Right lobe of liver (tissue), 6 donors: ENCODE measurements at regions of chr11 and their contacts with region 1.

Region 1: GRCh38 chr11:63768237-63769043 is at the start of gene ZFTA:
- DNase-seq: peak; percentile 66 to 76 (median 75)
- ATAC-seq: peak; percentile 3 to 16 (median 4)
- H3K4me3 ChIP-seq: peak within 1 kb of the TSS; percentile 64 to 83 (median 69)
- H3K27ac ChIP-seq: peak within 1 kb of the TSS; percentile 44 to 73 (median 67)
- H3K4me1 ChIP-seq: peaks cover 0 to 24% (median 9%) of the 10 kb centered on the region in 4 donors
- H3K27me3 ChIP-seq: no peaks in the 10 kb centered on the region
- CTCF ChIP-seq: peak; percentile 44 to 90 (median 62)
- POLR2A ChIP-seq: no peak
- total RNA-seq, gene ZFTA: 4.8 to 10.7 (median 6.6) TPM

Region 2: DNA sequence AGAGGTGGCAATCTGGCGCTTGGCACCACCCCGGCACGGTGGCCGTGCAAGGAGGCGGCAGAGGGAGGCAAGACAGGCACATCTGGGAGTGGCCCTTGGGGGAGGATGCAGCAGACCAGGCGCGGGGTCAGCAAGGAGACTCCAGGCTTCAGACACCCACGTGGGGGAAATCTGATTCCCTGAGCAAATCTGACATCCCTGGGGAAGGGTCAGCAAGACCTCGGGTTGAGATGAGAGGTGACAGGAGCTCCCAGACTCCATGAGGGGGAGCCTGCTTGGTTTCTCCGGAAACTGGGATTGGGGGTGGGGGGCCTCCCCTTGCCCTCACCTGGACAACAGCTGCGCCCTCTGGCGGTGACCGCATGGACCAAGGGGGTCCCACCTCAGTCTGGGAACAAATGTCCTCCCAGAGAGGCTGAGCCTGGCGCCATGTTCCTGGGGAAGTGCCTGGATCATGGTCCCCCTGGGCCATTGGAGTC is 152.5 kb after region 1 on chr11:
- intact Hi-C with region 1: loop called in 1 of 2 experiments (anchors 10 kb)
- DNase-seq: no peak
- ATAC-seq: peak in 3 of 4 donors; percentile 4 to 35 (median 14)
- H3K4me3 ChIP-seq: no peak overlapping the region
- H3K27ac ChIP-seq: no peak overlapping the region
- H3K4me1 ChIP-seq: peaks cover 0 to 29% (median 9%) of the 10 kb centered on the region in 4 donors
- H3K27me3 ChIP-seq: peaks cover 0 to 5% of the 10 kb centered on the region in 2 donors
- CTCF ChIP-seq: peak; percentile 33 to 56 (median 47)
- POLR2A ChIP-seq: no peak

Region 3: GRCh38 chr11:63945477-63946163 is 177.2 kb after region 1 on chr11:
- intact Hi-C with region 1: loop called in 1 of 2 experiments (anchors 10 kb)
- DNase-seq: peak; percentile 64 to 79 (median 69)
- ATAC-seq: peak; percentile 93 to 98 (median 96)
- H3K4me3 ChIP-seq: no peak overlapping the region
- H3K27ac ChIP-seq: no peak overlapping the region
- H3K4me1 ChIP-seq: peaks cover 0 to 10% (median 5%) of the 10 kb centered on the region in 4 donors
- H3K27me3 ChIP-seq: no peaks in the 10 kb centered on the region
- CTCF ChIP-seq: peak; percentile 71 to 78 (median 78)
- POLR2A ChIP-seq: no peak